Motor neuron (in vitro differentiated cells): ENCODE measurements at regions of chr1 and their contacts with region 1.

Region 1: GRCh38 chr1:89987170-89987819 is 7.6 kb upstream of the ZNF326 start:
- ATAC-seq: peak; percentile 22 to 93 (median 90)
- H3K4me3 ChIP-seq: no peak overlapping the region
- H3K27ac ChIP-seq: no peak overlapping the region
- H3K4me1 ChIP-seq: no peaks in the 10 kb centered on the region

Region 2: DNA sequence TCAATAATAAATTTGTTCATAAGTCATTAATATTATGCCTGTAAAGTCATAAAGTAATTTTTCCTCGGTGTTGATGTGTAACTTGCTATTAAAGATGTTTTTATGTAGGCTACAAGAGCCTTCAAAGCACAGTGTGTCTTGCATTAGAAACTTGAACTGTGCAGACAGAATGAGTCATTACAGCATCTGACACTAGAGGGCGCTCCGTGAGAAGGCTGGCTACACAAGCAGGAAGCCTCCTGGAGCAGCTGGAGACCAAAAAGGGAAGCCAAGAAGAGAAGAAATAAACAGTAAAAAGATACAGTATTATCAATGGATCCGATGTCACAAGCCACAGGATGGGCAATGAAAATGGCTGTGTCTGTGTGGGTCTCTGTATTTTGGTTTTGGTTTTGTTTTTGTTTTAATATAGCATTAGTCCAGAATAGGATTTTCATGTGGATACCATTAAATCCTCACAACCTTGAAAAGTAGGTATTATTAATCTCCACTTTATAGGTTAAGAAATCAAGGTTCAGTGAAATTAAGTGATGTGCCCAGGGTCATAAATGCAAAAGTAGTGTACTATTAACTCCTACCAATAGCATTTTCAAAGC is 182.6 kb before region 1 on chr1:
- in situ Hi-C with region 1: loop called in 8 of 9 experiments (anchors 5 to 25 kb)
- ATAC-seq: peak; percentile 58 to 95 (median 79)
- H3K4me3 ChIP-seq: no peak overlapping the region
- H3K27ac ChIP-seq: no peak overlapping the region
- H3K4me1 ChIP-seq: peaks cover 17 to 29% of the 10 kb centered on the region in 2 donors

Region 3: DNA sequence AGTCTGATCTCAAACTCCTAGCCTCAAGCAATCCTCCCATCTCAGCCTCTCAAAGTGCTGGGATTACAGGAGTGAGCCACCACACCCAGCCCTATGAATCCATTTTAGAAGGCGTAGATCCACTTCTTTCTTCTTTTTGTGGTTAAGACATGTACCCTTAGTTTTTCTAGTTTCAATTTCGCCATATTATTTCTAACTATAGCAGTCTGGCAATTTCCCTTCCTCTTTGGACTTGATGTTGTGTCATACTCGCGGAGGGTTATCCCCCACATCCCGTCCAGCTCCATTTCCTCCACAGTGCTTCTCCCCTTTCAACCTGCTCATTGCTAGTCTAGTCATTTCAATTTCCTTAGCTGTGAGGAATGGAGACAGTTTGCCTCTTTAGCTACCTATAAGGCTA is 171.7 kb before region 1 on chr1:
- in situ Hi-C with region 1: loop called in 2 of 9 experiments (anchors 10 to 25 kb)
- ATAC-seq: no peak
- H3K4me3 ChIP-seq: no peak overlapping the region
- H3K27ac ChIP-seq: no peak overlapping the region
- H3K4me1 ChIP-seq: peaks cover 6 to 9% of the 10 kb centered on the region in 2 donors